Heart left ventricle (tissue), 16 donors: ENCODE measurements at regions of chr5 and their contacts with region 1.

Region 1: GRCh38 chr5:175718401-175719108 is 60.7 kb downstream of the HRH2 start:
- DNase-seq: peak in 3 of 5 donors; percentile 49 to 62 (median 60)
- ATAC-seq: peak in 3 of 4 donors; percentile 35 to 66 (median 35)
- H3K4me3 ChIP-seq: no peak overlapping the region
- H3K27ac ChIP-seq: no peak overlapping the region
- H3K4me1 ChIP-seq: peaks cover 0 to 21% (median 0%) of the 10 kb centered on the region in 12 donors
- H3K27me3 ChIP-seq: no peaks in the 10 kb centered on the region
- CTCF ChIP-seq: peak; percentile 61 to 85 (median 74)
- POLR2A ChIP-seq: no peak

Region 2: GRCh38 chr5:175534070-175534932 is 184.3 kb before region 1 on chr5:
- intact Hi-C with region 1: loop called in 9 of 10 experiments (anchors 2 to 5 kb)
- DNase-seq: peak; percentile 77 to 92 (median 84)
- ATAC-seq: peak; percentile 84 to 98 (median 98)
- H3K4me3 ChIP-seq: peak overlapping the region in 2 of 12 donors; percentile 7 to 32
- H3K27ac ChIP-seq: no peak overlapping the region
- H3K4me1 ChIP-seq: peaks cover 0 to 9% (median 0%) of the 10 kb centered on the region in 12 donors
- H3K27me3 ChIP-seq: no peaks in the 10 kb centered on the region
- CTCF ChIP-seq: peak in 11 of 12 donors; percentile 84 to 99 (median 95)
- POLR2A ChIP-seq: no peak

Region 3: DNA sequence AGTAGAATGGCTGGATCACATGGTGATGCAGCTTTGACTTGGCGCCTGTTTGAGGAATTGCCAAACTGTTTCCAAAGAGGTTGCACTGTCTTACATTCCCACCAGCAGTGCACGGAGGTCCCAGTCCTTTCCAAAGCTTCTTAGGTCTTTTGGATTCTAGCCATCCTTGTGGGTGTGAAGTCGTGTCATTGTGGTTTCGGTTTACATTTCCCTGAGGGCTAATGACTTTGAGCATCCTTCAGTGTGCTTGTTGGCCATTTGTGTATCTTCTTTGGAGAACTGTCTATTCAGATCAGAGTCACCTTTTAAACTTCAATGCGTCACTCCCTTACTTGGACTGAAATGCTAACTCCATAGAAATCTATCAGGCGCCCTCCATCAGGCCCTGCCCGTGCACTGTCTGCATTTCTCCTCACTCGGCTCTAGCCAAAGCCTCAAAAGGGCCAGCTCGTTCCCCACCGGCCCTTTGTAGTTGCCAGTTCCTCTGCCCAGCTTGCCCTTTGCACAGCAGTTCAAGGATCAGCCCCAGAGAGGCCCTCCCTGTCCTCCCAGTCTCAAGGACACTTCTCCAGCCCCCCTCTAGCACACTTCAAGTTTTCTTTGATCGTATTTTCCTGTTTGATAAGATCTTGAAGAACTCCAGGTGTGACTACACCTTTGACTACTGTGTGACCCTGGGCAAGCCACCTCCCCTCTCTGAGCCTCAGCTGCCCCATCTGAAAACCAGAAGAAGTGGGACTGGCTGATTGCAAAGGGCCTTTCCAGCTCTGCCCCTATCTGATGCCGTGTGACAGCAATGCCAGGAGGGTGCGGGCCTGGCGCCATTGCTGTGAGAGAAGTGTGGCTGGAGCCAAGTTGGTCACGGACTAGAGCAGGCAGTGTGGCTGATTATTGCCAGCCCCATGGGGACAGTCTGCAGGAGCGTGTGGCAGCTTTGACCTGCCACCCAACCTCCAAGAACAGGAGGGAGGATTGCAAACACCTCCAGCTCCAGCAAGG is 55.1 kb before region 1 on chr5:
- intact Hi-C with region 1: loop called in 3 of 10 experiments (anchors 2 to 10 kb)
- DNase-seq: peak; percentile 74 to 92 (median 81)
- ATAC-seq: peak; percentile 92 to 96 (median 95)
- H3K4me3 ChIP-seq: no peak overlapping the region
- H3K27ac ChIP-seq: peak overlapping the region in 11 of 12 donors; percentile 38 to 83 (median 58)
- H3K4me1 ChIP-seq: peaks cover 0 to 76% (median 26%) of the 10 kb centered on the region in 12 donors
- H3K27me3 ChIP-seq: no peaks in the 10 kb centered on the region
- CTCF ChIP-seq: no peak
- POLR2A ChIP-seq: no peak